ENCODE measurements at regions of chr18 and their contacts with region 1.

Region 1: GRCh38 chr18:12883684-12884405 is at the start of gene PTPN2:
- DNase-seq: peak; percentile 94
- H3K27ac ChIP-seq: peak within 1 kb of the TSS; percentile 94
- CTCF ChIP-seq: no peak

Region 2: GRCh38 chr18:12376034-12376717 is 507.7 kb before region 1 on chr18:
- CTCF ChIA-PET with region 1: no interaction called
- POLR2A ChIA-PET with region 1: interaction called, 14 read pairs
- DNase-seq: peak; percentile 37
- H3K27ac ChIP-seq: peak overlapping the region; percentile 98
- CTCF ChIP-seq: no peak

Measured in RWPE1 (cell line).